ENCODE measurements at regions of chr3 and their contacts with region 1.

Region 1: GRCh38 chr3:77571971-77572715 is 532.2 kb downstream of the ROBO2 start:
- DNase-seq: no peak
- H3K4me3 ChIP-seq: no peak overlapping the region
- H3K27ac ChIP-seq: no peak overlapping the region
- H3K4me1 ChIP-seq: no peaks in the 10 kb centered on the region
- H3K27me3 ChIP-seq: no peaks in the 10 kb centered on the region
- CTCF ChIP-seq: no peak

Region 2: DNA sequence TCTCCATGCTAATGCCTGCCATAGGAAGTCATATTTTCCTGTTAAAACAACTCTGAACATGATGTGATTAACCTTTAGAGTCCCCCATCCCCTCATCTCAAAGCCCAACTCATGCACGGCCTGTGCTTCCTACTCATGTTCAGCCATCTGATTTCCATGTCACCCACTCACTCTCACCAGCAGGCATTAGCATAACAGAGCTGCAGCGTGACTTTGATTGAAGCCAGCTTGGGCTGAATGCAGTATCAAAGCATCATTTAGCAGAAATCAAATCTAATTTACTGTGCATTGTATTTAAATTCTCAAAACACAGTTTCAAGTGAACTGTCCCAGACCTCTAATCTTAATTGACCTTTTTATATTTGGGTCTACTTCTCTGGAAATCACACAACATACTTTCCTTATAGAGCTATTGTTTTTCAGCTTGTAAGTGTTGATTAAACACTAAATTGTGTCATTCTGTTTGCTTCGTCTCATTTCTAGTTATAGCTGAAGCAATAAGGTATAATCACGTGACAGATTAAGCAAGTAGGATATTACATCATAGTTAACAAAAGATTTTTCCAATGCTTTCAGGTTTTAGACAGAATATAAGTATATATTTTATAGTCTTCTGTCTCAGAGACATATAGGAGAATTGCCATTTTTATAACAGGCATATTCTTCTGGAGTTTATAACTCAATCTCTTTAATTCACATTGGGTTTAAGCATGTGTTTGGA is 30.8 kb before region 1 on chr3:
- CTCF ChIA-PET with region 1: no interaction called
- POLR2A ChIA-PET with region 1: no interaction called
- intact Hi-C with region 1: no loop called
- DNase-seq: no peak
- H3K4me3 ChIP-seq: no peak overlapping the region
- H3K27ac ChIP-seq: no peak overlapping the region
- H3K4me1 ChIP-seq: no peaks in the 10 kb centered on the region
- H3K27me3 ChIP-seq: no peaks in the 10 kb centered on the region
- CTCF ChIP-seq: no peak

Region 3: GRCh38 chr3:77553240-77553639 is 18.9 kb before region 1 on chr3:
- CTCF ChIA-PET with region 1: no interaction called
- POLR2A ChIA-PET with region 1: interaction called, 18 read pairs
- intact Hi-C with region 1: no loop called
- DNase-seq: no peak
- H3K4me3 ChIP-seq: no peak overlapping the region
- H3K27ac ChIP-seq: no peak overlapping the region
- H3K4me1 ChIP-seq: no peaks in the 10 kb centered on the region
- H3K27me3 ChIP-seq: no peaks in the 10 kb centered on the region
- CTCF ChIP-seq: no peak

Region 4: DNA sequence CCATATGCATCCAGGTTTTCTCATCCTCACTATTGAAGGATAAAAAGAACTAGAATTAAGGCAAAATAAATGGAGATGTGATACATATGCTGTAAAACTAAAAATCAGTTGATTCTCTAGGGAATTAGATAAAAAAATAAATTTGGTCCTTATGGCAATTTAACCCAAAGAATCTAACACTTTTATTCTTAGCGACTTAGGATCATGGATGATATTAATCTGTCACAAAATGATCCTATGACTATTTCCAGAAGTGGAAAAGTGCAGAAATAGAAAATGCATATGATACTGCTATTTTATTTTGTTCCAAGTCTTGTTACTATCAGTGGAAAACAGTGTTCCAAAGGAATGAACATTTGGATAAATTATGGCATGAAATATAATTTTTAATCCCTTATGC is 214.1 kb after region 1 on chr3:
- CTCF ChIA-PET with region 1: no interaction called
- POLR2A ChIA-PET with region 1: no interaction called
- intact Hi-C with region 1: no loop called
- DNase-seq: no peak
- H3K4me3 ChIP-seq: no peak overlapping the region
- H3K27ac ChIP-seq: no peak overlapping the region
- H3K4me1 ChIP-seq: no peaks in the 10 kb centered on the region
- H3K27me3 ChIP-seq: no peaks in the 10 kb centered on the region
- CTCF ChIP-seq: no peak